Activated CD4-positive, alpha-beta memory T cell treated with anti-CD3 and anti-CD28 coated beads for 36 hours (primary cell): ENCODE measurements at regions of chr12 and their contacts with region 1.

Region 1: GRCh38 chr12:12442548-12443071 is 85.7 kb downstream of the BORCS5 start:
- DNase-seq: no peak
- H3K4me3 Mint-ChIP-seq: peak overlapping the region; percentile 30
- H3K27ac Mint-ChIP-seq: peak overlapping the region; percentile 91
- H3K4me1 Mint-ChIP-seq: peaks cover 88% of the 10 kb centered on the region
- H3K27me3 Mint-ChIP-seq: no peaks in the 10 kb centered on the region

Region 2: GRCh38 chr12:12408265-12408690 is 34.3 kb before region 1 on chr12:
- CTCF ChIA-PET with region 1: no interaction called
- POLR2A ChIA-PET with region 1: interaction called, 4 read pairs
- intact Hi-C with region 1: loop called (anchors 2 kb)
- DNase-seq: no peak
- H3K4me3 Mint-ChIP-seq: no peak overlapping the region
- H3K27ac Mint-ChIP-seq: peak overlapping the region; percentile 24
- H3K4me1 Mint-ChIP-seq: peaks cover 36% of the 10 kb centered on the region
- H3K27me3 Mint-ChIP-seq: no peaks in the 10 kb centered on the region

Region 3: DNA sequence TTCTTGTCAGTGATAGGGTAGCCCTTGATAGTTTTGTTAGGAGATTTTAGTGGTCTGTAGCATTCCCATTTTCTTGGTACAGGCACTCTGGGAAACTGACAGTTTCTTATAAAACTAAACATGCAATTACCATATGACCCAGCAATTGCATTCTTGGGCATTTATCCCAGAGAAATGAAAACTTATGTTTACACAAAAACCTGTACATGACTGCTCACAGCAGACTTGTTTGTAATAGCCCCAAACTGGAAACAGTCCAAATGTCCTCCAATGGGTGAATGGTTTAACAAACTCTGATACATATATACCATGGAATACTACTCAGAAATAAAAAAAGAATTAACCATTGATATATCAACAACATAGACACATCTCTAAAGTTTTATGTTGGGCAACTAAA is 10.2 kb before region 1 on chr12:
- CTCF ChIA-PET with region 1: interaction called, 3 read pairs
- POLR2A ChIA-PET with region 1: interaction called, 8 read pairs
- intact Hi-C with region 1: loop called (anchors 1 kb)
- DNase-seq: no peak
- H3K4me3 Mint-ChIP-seq: no peak overlapping the region
- H3K27ac Mint-ChIP-seq: peak overlapping the region; percentile 57
- H3K4me1 Mint-ChIP-seq: peaks cover 73% of the 10 kb centered on the region
- H3K27me3 Mint-ChIP-seq: no peaks in the 10 kb centered on the region

Region 4: GRCh38 chr12:12467688-12468261 is 25.2 kb after region 1 on chr12:
- CTCF ChIA-PET with region 1: interaction called, 5 read pairs
- POLR2A ChIA-PET with region 1: interaction called, 46 read pairs
- intact Hi-C with region 1: no loop called
- DNase-seq: peak; percentile 80
- H3K4me3 Mint-ChIP-seq: peak overlapping the region; percentile 49
- H3K27ac Mint-ChIP-seq: peak overlapping the region; percentile 97
- H3K4me1 Mint-ChIP-seq: peaks cover 84% of the 10 kb centered on the region
- H3K27me3 Mint-ChIP-seq: no peaks in the 10 kb centered on the region

Region 5: GRCh38 chr12:12486661-12487240 is 44.1 kb after region 1 on chr12:
- CTCF ChIA-PET with region 1: interaction called, 3 read pairs
- POLR2A ChIA-PET with region 1: interaction called, 9 read pairs
- intact Hi-C with region 1: loop called (anchors 1 kb)
- DNase-seq: peak; percentile 59
- H3K4me3 Mint-ChIP-seq: peak overlapping the region; percentile 6
- H3K27ac Mint-ChIP-seq: peak overlapping the region; percentile 99
- H3K4me1 Mint-ChIP-seq: peaks cover 56% of the 10 kb centered on the region
- H3K27me3 Mint-ChIP-seq: no peaks in the 10 kb centered on the region